Sciatic nerve (tissue), 2 donors: ENCODE measurements at regions of chr1 and their contacts with region 1.

Region 1: DNA sequence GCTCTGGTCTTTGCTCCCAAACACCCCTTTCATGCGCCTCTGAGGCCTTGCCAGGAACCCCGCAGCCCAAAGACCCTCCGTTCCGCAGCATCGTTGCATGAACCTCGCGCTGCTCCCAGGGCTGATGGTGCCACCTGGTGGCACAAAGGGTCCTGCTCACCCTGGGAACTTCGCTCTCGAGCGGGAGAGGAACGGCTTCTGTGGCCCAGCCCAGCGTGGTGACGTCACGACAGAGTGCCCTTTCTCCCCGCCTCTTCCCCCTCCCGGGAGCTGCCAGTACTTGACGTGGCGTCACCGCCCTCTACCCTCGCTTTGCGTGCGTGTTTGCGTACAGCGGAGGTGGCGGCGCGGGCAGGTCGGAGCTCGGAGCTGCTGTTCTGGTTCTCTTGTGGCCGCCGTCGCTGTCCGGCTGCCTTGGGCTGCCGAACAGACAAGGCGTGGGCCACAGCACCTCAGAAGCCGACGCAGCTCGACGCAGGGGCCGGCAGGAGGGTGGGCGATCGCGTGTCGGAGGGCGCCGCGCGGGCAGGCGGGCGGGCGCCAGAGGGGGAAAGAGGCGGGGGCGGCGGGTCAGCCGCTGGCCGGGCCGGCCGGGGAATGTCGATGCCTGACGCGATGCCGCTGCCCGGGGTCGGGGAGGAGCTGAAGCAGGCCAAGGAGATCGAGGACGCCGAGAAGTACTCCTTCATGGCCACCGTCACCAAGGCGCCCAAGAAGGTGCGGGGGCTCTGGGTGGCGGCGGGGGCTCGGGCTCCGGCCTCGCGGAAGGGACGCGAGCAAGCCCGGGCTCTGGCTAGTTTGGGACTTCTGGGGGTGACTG is at the start of gene AHCYL1:
- DNase-seq: peak; percentile 100
- ATAC-seq: peak; percentile 98
- total RNA-seq, gene AHCYL1: 71.3 TPM

Region 2: GRCh38 chr1:109620841-109621286 is 363.8 kb before region 1 on chr1:
- intact Hi-C with region 1: no loop called
- DNase-seq: peak; percentile 96
- ATAC-seq: peak; percentile 90

Region 3: DNA sequence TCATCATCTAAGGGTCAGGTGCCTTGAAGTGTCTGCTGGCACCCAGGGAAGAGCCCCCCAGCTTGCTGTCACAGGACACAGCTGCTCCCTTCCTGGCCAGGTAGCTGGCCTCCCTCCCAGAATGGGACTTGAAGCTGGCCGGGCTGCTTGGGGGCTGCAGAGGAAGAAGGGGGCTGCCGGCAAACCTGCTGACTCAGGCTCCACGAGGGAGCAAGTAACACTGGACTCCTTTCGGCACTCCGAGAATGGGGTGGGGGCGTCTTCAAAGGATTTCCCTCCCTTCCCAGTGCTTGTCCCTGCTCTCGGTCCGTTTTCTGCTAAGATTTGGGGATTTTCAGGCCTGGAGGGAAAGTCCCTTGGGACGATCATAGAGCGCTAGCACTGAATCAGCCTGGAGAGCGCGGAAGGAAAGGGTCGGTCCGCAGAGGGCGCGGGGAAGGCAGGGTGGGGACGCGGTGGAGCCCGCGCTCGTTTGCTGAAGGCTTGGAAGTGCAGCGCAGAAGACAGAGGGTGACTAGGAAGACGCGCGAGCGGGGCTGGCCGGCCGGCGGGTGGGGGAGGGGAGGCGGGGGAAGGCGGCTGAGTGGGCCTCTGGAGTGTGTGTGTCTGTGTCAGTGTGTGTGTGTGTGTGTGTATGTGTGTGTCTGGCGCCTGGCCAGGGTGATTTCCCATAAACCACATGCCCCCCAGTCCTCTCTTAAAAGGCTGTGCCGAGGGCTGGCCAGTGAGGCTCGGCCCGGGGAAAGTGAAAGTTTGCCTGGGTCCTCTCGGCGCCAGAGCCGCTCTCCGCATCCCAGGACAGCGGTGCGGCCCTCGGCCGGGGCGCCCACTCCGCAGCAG is 74.3 kb before region 1 on chr1 and contains the start of gene CSF1:
- intact Hi-C with region 1: loop called (anchors 10 kb)
- DNase-seq: peak; percentile 91
- ATAC-seq: peak; percentile 82
- total RNA-seq, gene CSF1: 61.2 TPM

Region 4: GRCh38 chr1:110106013-110106941 is 121.6 kb after region 1 on chr1:
- intact Hi-C with region 1: no loop called
- DNase-seq: peak; percentile 79
- ATAC-seq: peak; percentile 87